Common myeloid progenitor, CD34-positive (primary cell): ENCODE measurements at regions of chr10 and their contacts with region 1.

Region 1: DNA sequence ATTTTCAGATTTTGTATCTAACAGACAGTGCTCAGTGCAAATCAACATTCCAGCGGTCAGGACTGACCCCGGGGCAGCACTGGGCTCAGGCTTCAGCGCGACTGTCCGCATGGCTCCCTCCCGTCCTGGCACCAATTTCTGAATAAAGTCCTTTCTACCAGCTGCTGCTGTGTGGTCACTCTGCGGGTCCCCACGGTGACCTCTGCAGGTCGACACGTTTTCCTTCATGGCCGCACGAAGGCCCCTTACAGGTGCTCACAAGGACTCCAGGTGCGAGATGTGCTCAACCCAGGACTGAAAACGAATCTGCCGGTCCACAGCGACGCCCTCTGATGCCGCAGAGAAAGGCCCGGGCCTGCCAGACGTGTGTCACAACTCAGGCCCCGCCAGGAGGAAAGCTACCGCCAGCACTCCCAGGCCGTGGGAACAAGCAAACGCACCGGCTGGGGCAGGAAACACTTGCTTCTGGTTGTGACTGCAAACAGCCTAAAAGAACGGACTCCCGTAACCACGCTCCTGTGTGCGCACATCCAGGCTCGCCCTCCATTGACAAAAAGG is 3.7 kb upstream of the UTF1 start:
- DNase-seq: peak in 1 of 3 donors; percentile 90
- H3K4me3 ChIP-seq: no peak overlapping the region
- H3K27ac ChIP-seq: no peak overlapping the region
- H3K4me1 ChIP-seq: peaks cover 0 to 32% (median 15%) of the 10 kb centered on the region in 4 experiments
- H3K27me3 ChIP-seq: peaks cover 0 to 76% (median 19%) of the 10 kb centered on the region in 5 experiments

Region 2: DNA sequence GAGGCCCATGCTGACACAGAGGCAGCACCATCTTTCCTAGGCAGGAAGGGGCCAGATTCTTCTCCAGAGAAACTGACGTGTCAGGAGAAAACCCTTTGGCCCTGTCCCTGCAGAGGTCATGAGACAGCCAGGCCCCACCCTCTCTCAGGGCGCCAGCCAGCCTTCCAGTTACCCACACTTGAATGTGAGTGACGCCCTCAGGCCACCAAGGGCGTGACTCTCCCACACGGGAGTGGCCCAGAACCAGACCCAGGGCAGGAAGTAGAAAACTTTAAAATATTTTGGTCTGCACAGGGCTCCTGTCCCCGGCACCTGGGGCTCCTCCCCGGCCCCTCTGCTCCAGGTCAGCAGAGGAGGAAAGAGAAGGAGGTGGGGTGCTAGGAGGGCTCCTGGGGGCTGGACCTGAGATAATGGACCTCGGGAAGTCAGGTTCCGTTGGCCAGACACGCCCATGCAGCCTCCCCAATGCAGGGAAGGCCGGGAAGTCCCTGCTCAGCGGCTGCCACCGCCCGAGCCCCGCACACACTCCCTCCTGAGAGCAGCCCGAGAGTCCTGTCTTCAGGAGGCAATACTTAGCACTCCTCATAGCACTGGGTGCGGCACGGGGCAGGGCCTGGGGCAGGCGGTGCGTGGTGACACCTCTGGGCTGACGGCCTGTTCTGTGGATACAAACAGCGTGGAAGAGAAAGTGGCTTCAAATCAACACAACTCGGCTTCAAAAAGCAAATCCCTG is 216.9 kb before region 1 on chr10:
- CTCF ChIA-PET with region 1: no interaction called
- POLR2A ChIA-PET with region 1: no interaction called
- DNase-seq: peak in 1 of 3 donors; percentile 26
- H3K4me3 ChIP-seq: no peak overlapping the region
- H3K27ac ChIP-seq: no peak overlapping the region
- H3K4me1 ChIP-seq: peaks cover 0 to 9% (median 5%) of the 10 kb centered on the region in 4 experiments
- H3K27me3 ChIP-seq: peaks cover 0 to 3% (median 0%) of the 10 kb centered on the region in 5 experiments

Region 3: DNA sequence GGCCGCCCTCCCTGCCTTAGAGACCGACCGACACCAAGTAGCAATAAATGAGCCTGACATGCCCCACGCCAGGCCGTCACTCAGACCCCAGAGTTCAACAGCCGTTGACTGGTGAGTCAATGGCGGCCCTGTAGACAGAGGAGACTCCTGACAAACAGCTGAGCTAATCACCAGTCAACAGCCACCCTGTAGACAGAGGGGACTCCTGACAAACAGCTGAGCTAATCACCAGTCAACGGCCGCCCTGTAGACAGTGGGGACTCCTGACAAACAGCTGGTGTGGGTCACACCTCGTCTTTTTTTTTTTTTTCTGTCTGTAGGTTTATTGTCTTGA is 83.2 kb before region 1 on chr10:
- CTCF ChIA-PET with region 1: interaction called, 13 read pairs
- POLR2A ChIA-PET with region 1: no interaction called
- DNase-seq: no peak
- H3K4me3 ChIP-seq: no peak overlapping the region
- H3K27ac ChIP-seq: no peak overlapping the region
- H3K4me1 ChIP-seq: peaks cover 0 to 6% (median 2%) of the 10 kb centered on the region in 4 experiments
- H3K27me3 ChIP-seq: peaks cover 0 to 18% (median 7%) of the 10 kb centered on the region in 5 experiments

Region 4: GRCh38 chr10:133186416-133187090 is 39.8 kb before region 1 on chr10:
- CTCF ChIA-PET with region 1: no interaction called
- POLR2A ChIA-PET with region 1: no interaction called
- DNase-seq: no peak
- H3K4me3 ChIP-seq: no peak overlapping the region
- H3K27ac ChIP-seq: no peak overlapping the region
- H3K4me1 ChIP-seq: no peaks in the 10 kb centered on the region
- H3K27me3 ChIP-seq: peaks cover 0 to 11% (median 2%) of the 10 kb centered on the region in 5 experiments

Region 5: DNA sequence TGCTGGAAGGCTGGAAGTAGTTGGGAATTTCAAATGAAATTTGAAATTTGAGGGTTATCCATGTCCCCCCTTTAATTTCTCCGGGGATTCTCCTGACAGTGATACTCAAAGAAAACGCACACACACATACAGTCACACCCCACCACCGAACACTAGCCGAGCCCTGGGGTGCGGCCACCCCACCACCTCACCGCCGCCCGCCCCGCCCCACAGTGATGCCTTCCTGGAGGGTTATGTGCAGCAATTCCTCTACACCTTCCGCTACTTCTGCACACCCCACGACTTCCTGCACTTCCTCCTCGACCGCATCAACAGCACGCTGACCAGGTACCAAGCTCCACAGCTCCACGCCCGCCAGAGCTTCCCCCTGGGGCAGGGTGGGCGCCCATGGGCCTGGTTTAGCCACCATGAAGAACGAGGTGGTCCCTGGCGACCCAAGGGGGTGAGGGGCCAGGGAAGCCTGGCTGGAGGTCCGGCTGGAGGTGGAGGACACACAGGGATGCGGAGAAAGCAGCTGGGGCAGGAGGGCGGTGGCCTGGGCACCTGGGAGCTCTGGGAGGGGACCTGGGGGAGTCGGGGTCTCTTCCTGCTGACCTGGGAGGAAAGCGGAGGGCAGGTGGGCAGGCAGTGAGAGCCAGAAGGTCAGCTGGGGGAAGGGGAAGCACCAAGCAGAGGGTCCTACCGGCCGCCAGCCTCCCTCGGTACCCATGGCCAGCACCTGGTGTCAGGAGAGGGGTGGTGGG is 15.8 kb before region 1 on chr10:
- CTCF ChIA-PET with region 1: no interaction called
- POLR2A ChIA-PET with region 1: no interaction called
- DNase-seq: no peak
- H3K4me3 ChIP-seq: no peak overlapping the region
- H3K27ac ChIP-seq: no peak overlapping the region
- H3K4me1 ChIP-seq: no peaks in the 10 kb centered on the region
- H3K27me3 ChIP-seq: peaks cover 0 to 10% (median 0%) of the 10 kb centered on the region in 5 experiments

Region 6: GRCh38 chr10:133261726-133262325 is 35.5 kb after region 1 on chr10:
- CTCF ChIA-PET with region 1: interaction called, 12 read pairs
- POLR2A ChIA-PET with region 1: no interaction called
- DNase-seq: peak in 2 of 3 donors; percentile 64 to 70
- H3K4me3 ChIP-seq: peak overlapping the region in 6 of 7 experiments; percentile 19 to 74 (median 59)
- H3K27ac ChIP-seq: no peak overlapping the region
- H3K4me1 ChIP-seq: peaks cover 5 to 64% (median 61%) of the 10 kb centered on the region in 4 experiments
- H3K27me3 ChIP-seq: no peaks in the 10 kb centered on the region